ENCODE measurements at regions of chr2 and their contacts with region 1.

Region 1: GRCh38 chr2:157628477-157629415 is at the start of gene ACVR1C:
- DNase-seq: peak; percentile 65
- ATAC-seq: peak; percentile 95
- H3K4me3 ChIP-seq: peak within 1 kb of the TSS; percentile 71
- H3K27ac ChIP-seq: no peak within 1 kb of the TSS
- H3K4me1 ChIP-seq: peaks cover 9% of the 10 kb centered on the region; the same call in 1 of the 2 replicates
- H3K27me3 ChIP-seq: peaks cover 22% of the 10 kb centered on the region
- CTCF ChIP-seq: peak; percentile 77
- total RNA-seq, gene ACVR1C: 0.17 and 0.40 TPM in 2 replicates

Region 2: GRCh38 chr2:157732548-157732963 is 103.8 kb after region 1 on chr2:
- CTCF ChIA-PET with region 1: no interaction called
- POLR2A ChIA-PET with region 1: no interaction called
- intact Hi-C with region 1: loop called (anchors 10 kb)
- DNase-seq: peak; percentile 73
- ATAC-seq: peak; percentile 86
- H3K4me3 ChIP-seq: no peak overlapping the region
- H3K27ac ChIP-seq: peak overlapping the region; percentile 42
- H3K4me1 ChIP-seq: peaks cover 25% of the 10 kb centered on the region
- H3K27me3 ChIP-seq: no peaks in the 10 kb centered on the region
- CTCF ChIP-seq: no peak

Region 3: GRCh38 chr2:157769856-157770255 is 141.1 kb after region 1 on chr2:
- CTCF ChIA-PET with region 1: no interaction called
- POLR2A ChIA-PET with region 1: no interaction called
- intact Hi-C with region 1: loop called (anchors 5 kb)
- DNase-seq: no peak
- ATAC-seq: no peak
- H3K4me3 ChIP-seq: no peak overlapping the region
- H3K27ac ChIP-seq: no peak overlapping the region
- H3K4me1 ChIP-seq: no peaks in the 10 kb centered on the region
- H3K27me3 ChIP-seq: no peaks in the 10 kb centered on the region
- CTCF ChIP-seq: no peak

Measured in PC-3 (cell line).